AG04449 (cell line): ENCODE measurements at regions of chr12 and their contacts with region 1.

Region 1: GRCh38 chr12:54958048-54958658 is 26.4 kb downstream of the TESPA1 start:
- DNase-seq: peak; percentile 31
- H3K4me3 ChIP-seq: no peak overlapping the region
- CTCF ChIP-seq: peak; percentile 36

Region 2: GRCh38 chr12:54701940-54702592 is 256.1 kb before region 1 on chr12:
- CTCF ChIA-PET with region 1: interaction called, 16 read pairs
- POLR2A ChIA-PET with region 1: no interaction called
- DNase-seq: no peak
- H3K4me3 ChIP-seq: no peak overlapping the region
- CTCF ChIP-seq: peak; percentile 40

Region 3: DNA sequence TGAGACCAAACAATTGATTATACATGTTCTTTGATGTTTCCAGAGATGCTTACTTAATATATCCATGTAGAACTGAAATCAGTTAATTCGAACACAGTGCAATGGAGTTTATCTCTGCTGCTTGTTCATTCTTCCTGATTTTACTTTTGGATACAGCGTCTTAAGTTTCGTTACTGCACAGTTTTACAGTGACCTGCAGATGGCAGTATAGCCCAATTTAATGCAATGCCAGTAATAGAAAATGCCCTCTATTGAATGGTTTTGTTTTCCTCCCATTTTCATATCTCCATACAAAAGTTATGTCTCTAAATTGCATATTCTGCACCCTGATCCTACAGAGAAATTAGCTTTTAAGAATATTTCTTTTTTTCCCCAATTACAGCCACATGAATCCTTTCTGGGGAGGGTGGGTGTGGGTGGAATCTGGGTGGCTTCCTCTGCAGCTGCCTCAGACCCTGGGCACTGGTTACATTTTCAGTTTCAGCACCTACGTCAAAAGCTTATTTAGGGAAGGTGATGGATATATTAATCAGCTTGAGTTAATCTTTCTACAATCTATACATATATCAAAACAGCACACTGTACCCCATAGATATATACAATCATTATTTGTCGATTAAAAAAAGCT is 208.8 kb before region 1 on chr12:
- CTCF ChIA-PET with region 1: interaction called, 97 read pairs
- POLR2A ChIA-PET with region 1: no interaction called
- DNase-seq: no peak
- H3K4me3 ChIP-seq: no peak overlapping the region
- CTCF ChIP-seq: peak; percentile 60

Region 4: DNA sequence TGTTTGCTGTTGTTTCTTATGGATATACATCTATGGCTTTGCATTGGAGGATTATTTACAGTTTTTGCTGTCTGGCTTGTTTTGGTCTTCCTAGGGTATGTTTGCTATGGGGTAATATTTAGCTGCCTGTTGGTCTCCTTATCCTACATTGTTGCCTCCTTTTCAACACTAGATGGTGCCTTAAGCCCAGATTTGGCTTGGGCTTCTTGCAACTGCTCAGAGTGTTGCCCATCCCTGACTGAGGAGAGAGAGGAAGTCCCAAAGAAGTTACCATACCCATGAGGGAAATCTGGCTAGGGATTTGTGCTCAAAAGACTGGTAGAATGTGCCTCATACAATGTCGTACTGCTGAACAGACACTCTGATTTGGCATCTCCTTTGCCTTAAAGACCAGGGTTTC is 198.4 kb before region 1 on chr12:
- CTCF ChIA-PET with region 1: interaction called, 11 read pairs
- POLR2A ChIA-PET with region 1: no interaction called
- DNase-seq: peak; percentile 0
- H3K4me3 ChIP-seq: no peak overlapping the region
- CTCF ChIP-seq: no peak

Region 5: DNA sequence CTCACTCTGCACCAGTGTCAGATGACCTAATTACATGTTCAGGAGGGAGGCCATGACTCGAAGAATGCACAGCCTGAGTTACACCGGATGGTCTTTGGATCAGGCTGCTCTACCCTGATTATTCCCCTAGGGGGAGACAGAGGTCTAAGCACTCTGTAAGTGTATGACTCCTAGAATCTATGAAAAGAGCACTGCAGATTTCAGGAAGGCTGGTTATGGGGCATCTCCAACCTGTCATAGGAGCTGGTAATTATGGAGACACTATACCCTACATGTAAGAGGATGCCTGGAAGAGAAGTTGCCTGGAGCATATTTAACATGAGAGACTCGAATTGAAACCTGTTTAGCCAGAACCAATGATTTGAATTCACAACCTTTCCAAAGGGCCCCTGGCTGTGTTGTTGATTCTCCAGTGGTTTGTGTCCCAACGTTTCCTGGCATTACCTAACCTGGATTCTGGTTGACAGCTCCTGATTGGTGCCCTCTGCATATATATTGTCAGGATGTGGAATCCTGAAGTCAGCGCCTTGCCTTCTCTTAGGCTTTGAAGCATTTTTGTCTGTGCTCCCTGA is 104.1 kb before region 1 on chr12 and contains the start of gene MUCL1:
- CTCF ChIA-PET with region 1: interaction called, 25 read pairs
- POLR2A ChIA-PET with region 1: no interaction called
- DNase-seq: no peak
- H3K4me3 ChIP-seq: no peak within 1 kb of the TSS
- CTCF ChIP-seq: peak; percentile 78

Region 6: GRCh38 chr12:54859502-54859901 is 98.7 kb before region 1 on chr12:
- CTCF ChIA-PET with region 1: interaction called, 25 read pairs
- POLR2A ChIA-PET with region 1: no interaction called
- DNase-seq: no peak
- H3K4me3 ChIP-seq: no peak overlapping the region
- CTCF ChIP-seq: no peak

Region 7: DNA sequence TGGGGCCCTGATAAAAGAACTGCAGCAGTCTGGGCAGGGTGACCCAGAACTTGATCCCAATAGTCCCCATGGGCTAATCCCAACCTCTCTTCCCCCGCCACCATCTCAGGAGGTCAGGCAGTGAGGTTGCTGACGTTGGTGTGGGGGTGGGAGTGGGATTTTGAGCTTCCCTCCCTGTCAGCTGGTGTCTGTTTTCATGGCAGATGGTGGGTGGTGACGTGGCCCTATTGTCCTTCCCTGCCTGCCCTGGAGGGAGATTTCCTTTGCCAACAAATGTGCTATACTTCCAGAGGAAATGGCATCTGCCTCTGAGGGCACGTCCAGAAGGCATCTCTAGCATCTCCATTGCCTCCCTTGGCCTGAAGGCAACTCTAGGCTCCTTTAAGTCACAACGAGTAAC is 99.3 kb after region 1 on chr12:
- CTCF ChIA-PET with region 1: no interaction called
- POLR2A ChIA-PET with region 1: no interaction called
- DNase-seq: no peak
- H3K4me3 ChIP-seq: no peak overlapping the region
- CTCF ChIP-seq: no peak

Region 8: GRCh38 chr12:55196188-55196587 is 238.0 kb after region 1 on chr12:
- CTCF ChIA-PET with region 1: no interaction called
- POLR2A ChIA-PET with region 1: no interaction called
- DNase-seq: no peak
- H3K4me3 ChIP-seq: no peak overlapping the region
- CTCF ChIP-seq: no peak